ENCODE measurements at regions of chr4 and their contacts with region 1.

Region 1: DNA sequence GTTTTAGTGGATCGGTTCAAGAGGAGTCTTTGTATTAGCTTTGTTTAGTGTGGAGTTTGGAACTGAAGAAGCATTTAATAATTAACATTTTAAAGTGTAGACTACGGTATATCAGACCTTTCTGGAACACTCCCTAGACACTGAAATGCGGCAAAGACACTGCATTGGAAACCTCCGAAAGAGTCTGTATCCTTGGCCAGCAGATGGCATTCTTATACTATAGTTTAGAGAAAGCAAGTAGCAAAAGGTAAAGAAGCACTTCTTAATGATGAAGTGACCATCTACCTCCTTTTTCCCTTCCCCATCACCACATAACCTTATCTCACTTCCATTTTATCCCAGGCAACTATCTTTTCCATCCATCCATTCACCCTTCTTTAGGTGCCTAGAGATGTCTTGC is 7.6 kb downstream of the FABP2 start:
- DNase-seq: peak; percentile 43
- H3K4me3 Mint-ChIP-seq: no peak overlapping the region
- H3K27ac Mint-ChIP-seq: no peak overlapping the region
- H3K4me1 Mint-ChIP-seq: no peaks in the 10 kb centered on the region
- H3K27me3 Mint-ChIP-seq: no peaks in the 10 kb centered on the region

Region 2: DNA sequence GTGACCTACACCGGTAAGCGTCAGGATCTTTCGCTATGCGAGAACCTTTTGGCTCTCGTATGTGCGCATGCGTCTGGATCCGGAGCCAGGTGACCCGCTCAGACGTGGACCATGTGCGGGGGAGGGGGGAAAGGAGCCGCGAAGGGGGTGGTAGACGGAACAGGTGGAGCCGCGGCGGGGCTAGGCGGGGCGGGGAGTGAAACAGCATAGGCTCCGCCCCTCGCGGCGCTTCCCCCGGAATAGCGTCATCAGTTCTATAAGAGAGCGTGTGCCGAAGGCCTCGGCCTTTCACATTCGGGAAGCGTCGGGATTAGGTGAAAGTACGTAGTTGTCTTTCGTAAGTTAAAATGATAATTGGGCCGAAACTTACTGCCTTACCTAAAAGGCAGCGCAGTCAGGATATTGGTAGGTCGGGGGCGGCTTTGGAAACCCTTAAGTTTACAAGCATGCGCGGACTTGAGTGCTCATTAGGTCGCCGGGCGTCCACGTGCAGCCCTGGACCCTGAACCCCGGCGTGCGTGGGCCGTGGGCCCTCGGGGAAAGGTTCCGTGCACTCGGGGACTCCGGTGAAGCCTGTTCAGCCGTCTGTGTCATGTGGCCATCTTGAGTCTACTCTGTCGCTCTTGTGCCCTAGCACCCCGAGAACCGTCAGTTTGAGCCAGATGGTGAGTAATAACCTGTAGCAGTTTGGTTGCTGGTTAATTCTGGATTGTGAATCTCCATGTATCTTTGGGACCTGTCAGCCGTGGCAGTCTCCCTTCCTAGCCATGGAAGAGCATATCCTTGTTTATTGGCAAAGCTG is 1035.7 kb before region 1 on chr4:
- CTCF ChIA-PET with region 1: no interaction called
- intact Hi-C with region 1: no loop called
- DNase-seq: peak; percentile 99
- H3K4me3 Mint-ChIP-seq: peak overlapping the region; percentile 87
- H3K27ac Mint-ChIP-seq: peak overlapping the region; percentile 98
- H3K4me1 Mint-ChIP-seq: peaks cover 24% of the 10 kb centered on the region
- H3K27me3 Mint-ChIP-seq: no peaks in the 10 kb centered on the region

Region 3: GRCh38 chr4:119209077-119209476 is 105.3 kb before region 1 on chr4:
- CTCF ChIA-PET with region 1: no interaction called
- intact Hi-C with region 1: no loop called
- DNase-seq: peak; percentile 75
- H3K4me3 Mint-ChIP-seq: no peak overlapping the region
- H3K27ac Mint-ChIP-seq: peak overlapping the region; percentile 83
- H3K4me1 Mint-ChIP-seq: peaks cover 37% of the 10 kb centered on the region
- H3K27me3 Mint-ChIP-seq: no peaks in the 10 kb centered on the region

Region 4: DNA sequence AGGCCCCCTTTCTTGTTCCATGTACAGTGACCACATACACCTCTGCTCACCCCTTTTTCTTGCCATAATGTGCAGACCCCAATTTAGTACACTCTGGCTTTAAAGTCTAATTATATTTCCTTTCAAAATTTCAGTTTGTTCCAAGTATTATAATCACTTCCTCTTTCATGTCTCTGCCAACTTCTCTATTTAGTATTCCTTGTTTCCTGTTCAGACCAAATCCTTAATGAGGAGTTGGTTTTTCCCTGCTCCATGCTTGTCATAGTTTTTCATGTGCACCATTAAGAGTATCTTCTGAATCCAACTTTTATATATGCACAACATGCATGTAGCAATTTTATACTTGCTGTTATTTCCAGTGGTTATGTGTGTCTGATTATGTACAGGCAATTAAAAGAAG is 69.5 kb before region 1 on chr4:
- CTCF ChIA-PET with region 1: no interaction called
- intact Hi-C with region 1: no loop called
- DNase-seq: no peak
- H3K4me3 Mint-ChIP-seq: no peak overlapping the region
- H3K27ac Mint-ChIP-seq: no peak overlapping the region
- H3K4me1 Mint-ChIP-seq: peaks cover 4% of the 10 kb centered on the region
- H3K27me3 Mint-ChIP-seq: no peaks in the 10 kb centered on the region

Region 5: GRCh38 chr4:119490335-119490734 is 176.0 kb after region 1 on chr4:
- CTCF ChIA-PET with region 1: interaction called, 3 read pairs
- intact Hi-C with region 1: loop called (anchors 1 kb)
- DNase-seq: peak; percentile 6
- H3K4me3 Mint-ChIP-seq: no peak overlapping the region
- H3K27ac Mint-ChIP-seq: no peak overlapping the region
- H3K4me1 Mint-ChIP-seq: no peaks in the 10 kb centered on the region
- H3K27me3 Mint-ChIP-seq: no peaks in the 10 kb centered on the region

Region 6: DNA sequence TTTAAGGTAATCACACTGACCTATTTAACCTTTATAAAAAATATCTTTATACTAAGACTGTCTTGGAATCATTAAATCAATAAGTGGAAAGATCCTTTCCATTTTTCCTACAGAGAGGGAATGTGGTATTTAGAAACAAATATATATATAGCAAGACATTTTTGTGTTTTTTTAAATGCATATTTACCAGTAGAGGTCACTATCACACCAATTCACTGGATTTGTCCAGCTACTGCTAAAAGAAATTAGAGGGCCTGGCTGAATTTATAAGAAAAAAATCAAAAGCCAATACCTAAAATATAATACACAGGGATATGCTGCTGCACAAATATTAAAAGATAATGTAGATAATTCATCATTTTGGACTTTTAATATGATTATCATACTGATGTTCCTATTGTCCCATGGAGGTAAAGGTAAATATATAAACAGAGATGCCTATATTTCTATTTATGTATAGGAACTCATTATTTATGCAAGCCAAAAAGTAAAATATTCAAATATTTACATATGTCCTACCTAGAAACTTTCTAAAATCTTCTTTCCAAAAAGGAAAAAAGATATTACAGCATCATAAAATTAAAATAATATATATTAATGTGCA is 244.8 kb after region 1 on chr4:
- CTCF ChIA-PET with region 1: no interaction called
- intact Hi-C with region 1: loop called (anchors 1 kb)
- DNase-seq: no peak
- H3K4me3 Mint-ChIP-seq: no peak overlapping the region
- H3K27ac Mint-ChIP-seq: no peak overlapping the region
- H3K4me1 Mint-ChIP-seq: no peaks in the 10 kb centered on the region
- H3K27me3 Mint-ChIP-seq: no peaks in the 10 kb centered on the region

Region 7: GRCh38 chr4:120049732-120050494 is 735.6 kb after region 1 on chr4:
- CTCF ChIA-PET with region 1: no interaction called
- intact Hi-C with region 1: loop called (anchors 1 kb)
- DNase-seq: peak; percentile 82
- H3K4me3 Mint-ChIP-seq: no peak overlapping the region
- H3K27ac Mint-ChIP-seq: no peak overlapping the region
- H3K4me1 Mint-ChIP-seq: peaks cover 2% of the 10 kb centered on the region
- H3K27me3 Mint-ChIP-seq: no peaks in the 10 kb centered on the region

Region 8: GRCh38 chr4:120056246-120056645 is 741.9 kb after region 1 on chr4:
- CTCF ChIA-PET with region 1: no interaction called
- intact Hi-C with region 1: loop called (anchors 1 kb)
- DNase-seq: no peak
- H3K4me3 Mint-ChIP-seq: no peak overlapping the region
- H3K27ac Mint-ChIP-seq: no peak overlapping the region
- H3K4me1 Mint-ChIP-seq: peaks cover 6% of the 10 kb centered on the region
- H3K27me3 Mint-ChIP-seq: no peaks in the 10 kb centered on the region